GM18951 (cell line): ENCODE measurements at regions of chr17 and their contacts with region 1.

Region 1: DNA sequence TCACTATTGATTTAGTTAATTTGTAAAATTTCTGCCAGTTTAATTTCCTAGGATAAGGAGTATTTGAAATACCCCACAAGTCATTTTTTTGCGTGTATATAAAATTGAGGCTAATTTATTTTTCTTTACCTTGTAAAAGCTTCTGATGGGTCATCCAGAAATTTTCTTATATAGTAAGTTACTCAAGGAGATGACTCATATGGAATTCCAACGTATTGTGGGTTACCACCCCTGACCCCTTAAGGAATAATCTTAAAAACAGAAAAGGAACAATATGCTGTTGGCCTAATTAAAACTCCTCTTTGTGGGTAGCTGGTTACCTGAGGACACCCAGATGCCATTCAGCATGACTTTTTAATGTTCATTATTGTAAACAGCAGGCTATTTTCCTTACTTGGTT is 13.6 kb downstream of the HEATR6 start:
- POLR2A ChIP-seq: no peak

Region 2: DNA sequence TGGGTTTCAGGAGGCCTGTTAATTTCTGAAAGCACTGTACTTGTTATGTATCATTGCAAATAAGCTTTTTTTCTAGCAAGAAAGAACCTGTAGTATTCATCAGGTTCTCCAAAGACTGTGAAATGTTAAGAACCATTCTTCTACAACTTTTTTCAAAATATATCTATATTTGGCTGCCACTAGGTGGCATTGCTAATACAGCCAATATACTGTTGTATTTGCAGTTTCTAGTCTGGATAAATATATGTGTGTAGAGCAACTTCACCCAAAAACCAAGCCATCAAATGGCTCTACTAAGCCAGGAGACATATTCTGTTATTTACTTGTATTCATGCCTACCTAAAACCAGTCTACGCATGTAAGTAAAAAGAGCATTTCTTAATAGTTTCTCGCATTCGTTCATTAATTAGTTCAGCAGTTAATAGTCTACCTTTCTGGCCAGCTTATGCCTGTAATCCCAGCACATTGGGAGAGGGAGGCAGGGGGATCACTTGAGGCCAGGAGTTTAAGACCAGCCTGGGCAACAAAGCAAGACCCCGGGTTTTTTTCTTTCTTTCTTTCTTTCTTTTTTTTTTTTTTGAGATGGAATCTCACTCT is 318.2 kb before region 1 on chr17:
- in situ Hi-C with region 1: loop called (anchors 25 kb)
- POLR2A ChIP-seq: no peak